GM10248 (cell line): ENCODE measurements at regions of chr3 and their contacts with region 1.

Region 1: GRCh38 chr3:98573181-98573728 is 20.2 kb downstream of the CPOX start:
- DNase-seq: peak; percentile 41
- CTCF ChIP-seq: peak; percentile 47

Region 2: DNA sequence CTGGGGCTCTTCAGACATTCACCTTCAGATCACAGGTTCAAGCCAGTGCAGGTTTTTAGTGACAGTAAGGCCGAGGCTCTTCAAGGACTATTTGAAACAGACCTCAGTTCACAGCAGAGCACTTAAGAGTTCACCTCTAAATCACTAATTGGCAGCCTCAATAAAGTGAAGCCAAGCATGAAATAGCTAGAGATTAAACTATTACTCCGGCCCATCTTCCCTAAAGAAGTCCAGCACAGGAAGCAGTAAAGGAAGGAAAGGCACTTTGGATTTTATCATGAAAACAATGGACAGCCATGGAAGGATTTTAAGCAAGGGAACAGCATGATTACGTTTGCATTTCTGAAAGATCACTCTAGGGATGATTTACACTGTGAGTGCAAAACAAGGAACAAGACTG is 836.3 kb before region 1 on chr3:
- CTCF ChIA-PET with region 1: no interaction called
- POLR2A ChIA-PET with region 1: no interaction called
- DNase-seq: no peak
- CTCF ChIP-seq: no peak

Region 3: GRCh38 chr3:98262046-98262445 is 311.2 kb before region 1 on chr3:
- CTCF ChIA-PET with region 1: no interaction called
- POLR2A ChIA-PET with region 1: no interaction called
- DNase-seq: no peak
- CTCF ChIP-seq: no peak

Region 4: DNA sequence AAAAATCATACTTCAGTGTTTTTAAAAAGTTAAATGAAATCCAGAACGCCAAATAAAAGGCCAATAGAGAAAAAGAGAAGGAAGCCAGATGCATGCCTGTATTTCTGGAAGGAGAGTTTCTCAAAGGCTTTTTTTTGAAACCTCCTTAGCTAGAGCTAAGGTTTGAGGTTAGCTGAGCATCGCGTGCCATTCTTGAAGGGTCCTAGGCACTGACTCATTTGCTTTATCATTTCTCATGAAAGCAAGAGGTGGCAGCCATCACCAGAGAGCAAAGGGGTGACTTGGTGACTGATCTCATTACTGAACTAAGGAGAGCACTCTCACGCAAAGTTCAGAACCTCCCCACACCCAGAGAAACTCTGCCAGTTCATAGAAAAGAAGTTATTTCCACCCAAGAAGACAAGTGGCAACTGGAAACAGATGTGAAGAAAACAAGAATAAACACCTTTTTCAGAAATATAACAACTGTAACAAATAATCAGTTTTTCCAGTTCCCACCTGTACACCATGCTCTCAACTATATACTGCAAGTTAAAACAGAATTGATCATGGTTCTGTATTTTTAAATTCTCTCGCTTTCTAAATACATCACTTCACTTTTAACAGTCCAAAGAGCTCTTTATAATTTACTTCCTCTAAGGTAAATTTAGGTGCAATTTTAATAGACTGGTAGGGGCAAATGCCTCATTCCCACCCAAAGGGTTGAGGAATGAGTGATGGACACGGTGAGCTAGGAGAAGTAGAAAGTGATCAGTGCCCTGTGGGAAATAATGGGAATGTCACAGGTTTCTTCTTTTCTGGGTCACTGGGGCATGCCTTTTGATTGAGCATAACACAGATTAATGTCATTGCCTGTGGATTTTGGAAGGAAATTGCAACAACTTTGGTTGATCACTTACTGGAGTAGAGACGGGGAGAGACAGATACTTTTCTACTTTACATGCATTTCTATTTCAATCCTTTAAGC is 16.8 kb before region 1 on chr3:
- CTCF ChIA-PET with region 1: interaction called, 14 read pairs
- POLR2A ChIA-PET with region 1: no interaction called
- DNase-seq: peak; percentile 54
- CTCF ChIP-seq: no peak

Region 5: DNA sequence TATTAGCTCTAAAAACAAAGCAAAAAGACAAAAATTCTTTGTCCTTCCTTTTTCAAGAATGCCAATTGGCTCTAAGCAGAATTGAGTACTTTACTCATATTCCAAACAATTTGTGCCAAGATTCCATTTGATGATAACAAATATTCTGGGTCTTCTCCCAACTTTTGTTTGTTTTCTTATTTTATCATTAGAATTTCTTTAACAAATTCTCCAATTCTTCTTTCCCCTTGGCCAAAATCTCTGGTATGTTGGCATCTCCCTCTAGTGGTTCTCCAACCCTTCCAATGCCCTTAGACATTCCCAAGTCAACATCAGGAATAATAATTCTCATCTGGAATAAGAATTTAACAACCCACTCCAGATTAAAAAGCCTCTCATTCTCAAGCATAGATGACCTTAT is 14.8 kb after region 1 on chr3:
- CTCF ChIA-PET with region 1: interaction called, 16 read pairs
- POLR2A ChIA-PET with region 1: no interaction called
- DNase-seq: no peak
- CTCF ChIP-seq: no peak

Region 6: DNA sequence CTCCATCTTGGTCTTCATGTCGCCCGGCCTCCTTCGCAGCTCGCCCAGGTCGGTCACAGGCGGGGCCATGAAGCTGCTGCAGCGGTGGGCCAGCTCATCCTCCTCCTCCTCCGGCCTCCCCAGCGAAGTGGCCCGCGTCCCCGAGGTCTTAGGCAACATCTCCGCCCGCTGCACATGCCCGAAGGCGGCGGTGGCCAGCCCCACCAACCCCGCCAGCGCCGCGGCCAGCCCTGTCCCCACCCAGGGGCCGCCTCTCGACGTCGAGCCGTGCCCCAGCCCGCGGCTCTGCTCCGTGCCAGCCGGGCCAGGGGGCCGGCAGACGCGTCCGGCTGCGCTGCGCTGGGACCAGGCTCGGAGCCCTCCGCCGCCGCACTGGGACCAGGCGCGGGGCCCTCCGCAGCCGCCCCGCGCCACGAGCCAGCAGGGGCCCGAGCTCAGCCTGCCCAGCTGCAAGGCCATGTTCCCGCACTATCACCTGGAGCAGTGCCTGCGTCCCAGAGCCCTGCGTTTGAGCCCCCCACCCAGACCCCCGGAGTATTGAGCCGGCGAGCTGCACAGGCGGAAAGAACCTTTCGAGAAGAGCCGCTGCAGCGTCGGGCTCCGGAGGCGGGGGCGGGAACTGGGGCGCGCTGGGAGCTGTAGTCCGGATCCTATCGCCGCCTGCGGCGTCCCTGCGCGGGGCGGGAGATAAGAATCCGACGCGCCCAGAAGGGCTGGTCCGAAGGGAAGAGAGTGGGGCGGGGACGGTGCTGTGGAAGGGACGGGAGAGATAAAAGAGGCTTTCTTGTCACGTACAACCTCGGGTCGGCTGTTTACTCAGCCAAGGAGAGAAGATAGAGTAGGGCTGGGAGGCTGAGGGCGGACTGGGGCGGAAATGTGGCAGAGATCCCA is 20.0 kb after region 1 on chr3 and contains the start of gene CPOX:
- CTCF ChIA-PET with region 1: interaction called, 16 read pairs
- POLR2A ChIA-PET with region 1: no interaction called
- DNase-seq: peak; percentile 90
- CTCF ChIP-seq: no peak

Region 7: DNA sequence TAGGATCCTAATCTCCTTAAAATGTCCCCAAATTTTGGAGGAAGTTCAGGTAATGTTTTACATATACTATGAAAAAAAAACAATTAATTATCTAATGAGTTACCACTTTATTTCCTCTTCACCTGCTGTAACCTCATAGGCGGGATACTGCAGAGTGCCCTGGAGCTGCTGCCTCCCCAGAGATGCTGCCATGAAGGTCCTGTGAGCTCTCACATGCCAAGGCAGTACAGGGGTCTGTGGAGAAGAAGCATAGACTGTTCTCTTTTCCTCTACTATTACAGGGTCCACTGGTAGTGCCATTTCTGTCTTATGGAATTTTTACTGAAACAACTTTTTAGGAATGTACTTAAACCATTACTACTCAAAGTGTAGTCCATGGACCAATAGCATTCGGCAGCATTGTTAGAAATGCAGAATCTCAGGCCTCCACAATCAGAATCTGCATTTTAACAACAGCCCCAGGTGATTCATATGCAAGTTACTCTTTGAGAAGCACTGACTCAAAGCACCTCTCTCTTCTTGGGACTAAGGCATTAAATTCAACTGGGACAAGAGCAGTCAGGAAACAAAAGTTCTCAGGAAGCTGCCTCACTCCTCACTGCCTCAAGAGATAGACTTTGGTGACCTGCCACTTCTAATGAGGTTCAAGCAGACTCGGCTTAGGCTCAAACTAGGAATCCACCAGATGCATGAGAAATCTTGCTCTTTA is 50.5 kb after region 1 on chr3:
- CTCF ChIA-PET with region 1: no interaction called
- POLR2A ChIA-PET with region 1: no interaction called
- DNase-seq: no peak
- CTCF ChIP-seq: no peak